Endothelial cell of umbilical vein (primary cell): ENCODE measurements at regions of chr3 and their contacts with region 1.

Region 1: GRCh38 chr3:44198284-44199269 is 43.1 kb upstream of the TOPAZ1 start:
- DNase-seq: peak; percentile 69
- H3K4me3 ChIP-seq: no peak overlapping the region
- H3K27ac ChIP-seq: no peak overlapping the region
- H3K4me1 ChIP-seq: no peaks in the 10 kb centered on the region
- H3K27me3 ChIP-seq: peaks cover 2 to 3% of the 10 kb centered on the region in 2 experiments
- CTCF ChIP-seq: peak; percentile 72 to 83
- POLR2A ChIP-seq: no peak

Region 2: DNA sequence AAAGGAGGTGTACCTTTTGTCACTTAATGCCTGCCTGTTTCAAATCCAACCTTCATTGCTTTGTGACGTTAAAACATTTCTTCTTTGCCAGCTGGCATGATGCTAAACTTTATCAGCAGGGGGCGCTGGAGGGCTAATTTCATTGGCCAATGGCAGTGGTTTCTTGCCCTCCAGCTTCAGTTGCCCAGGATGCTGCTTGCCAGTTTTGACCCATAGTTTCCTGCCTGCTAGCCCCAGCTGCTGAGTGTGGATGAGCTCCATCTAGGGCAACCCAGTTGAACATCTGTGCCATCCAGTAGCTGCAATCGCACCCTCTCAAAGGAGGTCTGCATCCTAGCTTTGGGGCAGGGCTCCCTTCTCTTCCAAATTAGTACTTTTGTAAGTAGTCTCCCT is 1367.3 kb before region 1 on chr3:
- CTCF ChIA-PET with region 1: no interaction called
- POLR2A ChIA-PET with region 1: no interaction called
- dilution Hi-C with region 1: no loop called
- intact Hi-C with region 1: loop called (anchors 5 kb)
- DNase-seq: peak; percentile 52
- H3K4me3 ChIP-seq: no peak overlapping the region
- H3K27ac ChIP-seq: no peak overlapping the region
- H3K4me1 ChIP-seq: no peaks in the 10 kb centered on the region
- H3K27me3 ChIP-seq: peaks cover 6 to 8% of the 10 kb centered on the region in 2 experiments
- CTCF ChIP-seq: peak; percentile 73 to 77
- POLR2A ChIP-seq: no peak

Region 3: GRCh38 chr3:43155464-43156121 is 1043.0 kb before region 1 on chr3:
- CTCF ChIA-PET with region 1: no interaction called
- POLR2A ChIA-PET with region 1: no interaction called
- dilution Hi-C with region 1: no loop called
- intact Hi-C with region 1: loop called (anchors 10 kb)
- DNase-seq: peak; percentile 68
- H3K4me3 ChIP-seq: no peak overlapping the region
- H3K27ac ChIP-seq: no peak overlapping the region
- H3K4me1 ChIP-seq: no peaks in the 10 kb centered on the region
- H3K27me3 ChIP-seq: peaks cover 15 to 17% of the 10 kb centered on the region in 2 experiments
- CTCF ChIP-seq: peak; percentile 58 to 72
- POLR2A ChIP-seq: no peak

Region 4: DNA sequence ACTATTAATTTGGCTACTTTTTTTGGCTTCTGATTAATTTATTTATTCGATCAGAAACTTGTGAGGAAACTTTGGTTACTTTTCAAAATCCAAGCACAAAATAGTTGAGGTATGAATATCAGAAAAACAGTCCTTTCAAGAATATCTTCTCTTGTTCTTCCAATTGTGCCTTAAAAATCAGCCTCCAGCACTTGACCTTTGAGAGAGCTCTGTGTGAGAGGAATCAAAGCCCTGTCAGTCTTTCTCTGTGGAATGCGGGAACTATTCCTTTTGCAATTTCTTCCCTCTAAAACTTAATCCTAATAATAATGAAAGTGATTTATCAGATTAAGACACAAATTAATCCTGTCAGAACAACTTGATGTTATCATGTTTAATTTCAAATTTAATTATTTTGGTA is 321.9 kb before region 1 on chr3:
- CTCF ChIA-PET with region 1: no interaction called
- POLR2A ChIA-PET with region 1: no interaction called
- dilution Hi-C with region 1: no loop called
- intact Hi-C with region 1: no loop called
- DNase-seq: no peak
- H3K4me3 ChIP-seq: no peak overlapping the region
- H3K27ac ChIP-seq: no peak overlapping the region
- H3K4me1 ChIP-seq: peaks cover 26% of the 10 kb centered on the region
- H3K27me3 ChIP-seq: peaks cover 2 to 3% of the 10 kb centered on the region in 2 experiments
- CTCF ChIP-seq: no peak
- POLR2A ChIP-seq: no peak

Region 5: DNA sequence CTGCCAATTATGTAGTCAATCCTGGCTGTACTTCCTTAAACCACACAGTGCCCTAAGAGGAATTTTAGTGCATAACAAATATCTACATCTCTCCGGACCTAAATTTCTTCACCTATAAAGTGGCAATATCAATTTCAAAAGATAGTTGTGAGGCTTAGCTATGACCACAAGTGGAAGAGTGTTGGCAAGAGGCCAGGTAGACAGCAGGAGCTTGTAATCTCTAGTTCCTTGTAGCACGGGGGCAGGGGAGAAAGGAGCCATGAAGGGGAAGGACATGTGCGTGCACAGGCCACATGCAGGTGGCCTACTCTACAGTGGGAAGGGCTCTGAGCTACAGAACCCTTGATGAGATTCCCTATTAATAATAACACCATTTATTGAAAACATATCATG is 238.1 kb before region 1 on chr3:
- CTCF ChIA-PET with region 1: no interaction called
- POLR2A ChIA-PET with region 1: no interaction called
- dilution Hi-C with region 1: no loop called
- intact Hi-C with region 1: no loop called
- DNase-seq: no peak
- H3K4me3 ChIP-seq: no peak overlapping the region
- H3K27ac ChIP-seq: no peak overlapping the region
- H3K4me1 ChIP-seq: no peaks in the 10 kb centered on the region
- H3K27me3 ChIP-seq: peaks cover 2 to 3% of the 10 kb centered on the region in 2 experiments
- CTCF ChIP-seq: no peak
- POLR2A ChIP-seq: no peak

Region 6: DNA sequence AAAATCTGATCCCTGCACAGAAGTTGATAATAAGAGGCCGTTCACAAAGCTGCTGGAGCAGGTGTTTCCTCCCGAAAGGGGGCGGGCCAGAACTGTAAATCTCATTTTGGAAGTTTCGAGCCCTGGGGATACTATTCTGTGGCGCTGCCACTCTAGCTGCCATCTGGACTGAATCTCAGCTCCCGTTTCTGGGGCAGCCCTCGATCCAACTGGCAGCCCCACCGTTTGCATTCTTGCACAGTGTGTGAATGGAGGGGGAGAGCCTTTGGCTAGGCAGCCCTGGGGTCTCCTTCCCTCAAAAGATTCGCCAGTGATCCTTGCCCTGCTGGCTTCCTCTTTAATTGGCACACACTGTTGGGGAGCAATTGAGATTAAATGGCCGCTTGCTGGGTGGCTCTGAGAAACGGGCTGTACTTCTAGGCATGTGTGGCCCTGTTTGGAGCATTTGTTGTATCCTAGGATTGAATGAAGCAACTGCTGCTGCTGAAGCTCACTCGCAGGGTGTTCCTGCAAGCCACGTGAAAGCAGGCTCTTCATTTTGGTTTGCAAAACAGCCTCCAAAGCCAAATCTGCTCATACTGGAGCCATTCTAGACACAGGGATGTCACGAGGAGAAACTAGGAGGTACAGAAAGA is 14.1 kb before region 1 on chr3:
- CTCF ChIA-PET with region 1: interaction called, 22 read pairs
- POLR2A ChIA-PET with region 1: no interaction called
- dilution Hi-C with region 1: no loop called
- intact Hi-C with region 1: no loop called
- DNase-seq: no peak
- H3K4me3 ChIP-seq: no peak overlapping the region
- H3K27ac ChIP-seq: no peak overlapping the region
- H3K4me1 ChIP-seq: no peaks in the 10 kb centered on the region
- H3K27me3 ChIP-seq: peaks cover 2 to 3% of the 10 kb centered on the region in 2 experiments
- CTCF ChIP-seq: no peak
- POLR2A ChIP-seq: no peak

Region 7: GRCh38 chr3:44235604-44236484 is 37.3 kb after region 1 on chr3:
- CTCF ChIA-PET with region 1: interaction called, 8 read pairs
- POLR2A ChIA-PET with region 1: no interaction called
- dilution Hi-C with region 1: no loop called
- intact Hi-C with region 1: loop called (anchors 1 kb)
- DNase-seq: peak; percentile 96
- H3K4me3 ChIP-seq: no peak overlapping the region
- H3K27ac ChIP-seq: peak overlapping the region; percentile 57
- H3K4me1 ChIP-seq: peaks cover 12% of the 10 kb centered on the region
- H3K27me3 ChIP-seq: no peaks in the 10 kb centered on the region
- CTCF ChIP-seq: peak; percentile 59 to 86
- POLR2A ChIP-seq: no peak

Region 8: DNA sequence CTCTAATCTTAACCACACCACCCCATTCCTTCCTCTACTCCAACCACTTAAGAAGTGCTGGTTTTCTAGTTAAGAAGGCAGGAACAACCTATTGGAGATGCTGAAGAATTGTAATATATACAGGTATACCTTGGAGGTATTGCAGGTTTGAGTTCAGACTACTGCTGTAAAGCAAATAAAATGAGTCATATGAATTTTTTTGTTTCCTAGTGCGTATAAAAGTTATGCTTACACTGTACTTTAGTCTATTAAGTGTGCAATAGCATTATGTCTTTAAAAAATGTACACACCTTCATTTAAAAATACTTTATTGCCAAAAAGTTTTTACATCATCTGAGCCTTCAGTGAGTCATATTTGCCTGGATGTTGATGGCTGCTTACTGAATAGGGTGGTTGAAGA is 65.6 kb after region 1 on chr3:
- CTCF ChIA-PET with region 1: no interaction called
- POLR2A ChIA-PET with region 1: no interaction called
- dilution Hi-C with region 1: no loop called
- intact Hi-C with region 1: no loop called
- DNase-seq: no peak
- H3K4me3 ChIP-seq: no peak overlapping the region
- H3K27ac ChIP-seq: no peak overlapping the region
- H3K4me1 ChIP-seq: no peaks in the 10 kb centered on the region
- H3K27me3 ChIP-seq: peaks cover 3% of the 10 kb centered on the region in 2 experiments
- CTCF ChIP-seq: no peak
- POLR2A ChIP-seq: no peak

Region 9: GRCh38 chr3:44654039-44654438 is 455.5 kb after region 1 on chr3:
- CTCF ChIA-PET with region 1: no interaction called
- POLR2A ChIA-PET with region 1: no interaction called
- dilution Hi-C with region 1: no loop called
- intact Hi-C with region 1: no loop called
- DNase-seq: no peak
- H3K4me3 ChIP-seq: no peak overlapping the region
- H3K27ac ChIP-seq: no peak overlapping the region
- H3K4me1 ChIP-seq: peaks cover 5% of the 10 kb centered on the region
- H3K27me3 ChIP-seq: no peaks in the 10 kb centered on the region
- CTCF ChIP-seq: no peak
- POLR2A ChIP-seq: no peak